Natural killer cell (primary cell): ENCODE measurements at regions of chr20 and their contacts with region 1.

Region 1: DNA sequence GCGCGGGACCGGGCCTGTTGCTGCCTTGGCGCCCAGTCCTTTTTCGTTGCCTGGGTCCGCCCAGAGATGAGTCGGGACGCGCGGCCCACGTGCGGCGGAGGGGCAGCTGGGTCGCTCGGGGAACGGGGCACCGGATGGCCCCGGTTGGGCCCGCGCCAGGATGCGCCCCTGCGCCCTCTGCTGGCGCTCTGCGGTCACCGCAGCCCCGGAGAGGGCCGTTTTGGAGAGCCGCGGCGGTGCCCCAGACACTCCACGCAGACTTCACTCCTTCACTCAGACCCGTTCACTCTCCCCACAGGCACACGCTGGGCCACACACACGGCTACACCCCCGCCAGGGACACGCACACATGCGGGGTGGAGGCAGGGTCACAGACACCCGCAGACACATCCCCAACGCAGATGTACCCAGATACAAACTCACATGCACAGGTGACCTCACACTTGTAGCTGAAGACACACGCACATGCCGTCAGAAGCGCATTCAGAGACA is 38.8 kb downstream of the SRC start:
- DNase-seq: peak; percentile 82 to 87
- ATAC-seq: peak; percentile 93 to 99 (median 97)
- H3K4me3 ChIP-seq: peak overlapping the region; percentile 44
- H3K4me3 Mint-ChIP-seq: peak overlapping the region; percentile 93
- H3K27ac ChIP-seq: no peak overlapping the region
- H3K27ac Mint-ChIP-seq: peak overlapping the region in 1 of 2 donors; percentile 81
- H3K4me1 ChIP-seq: peaks cover 15% of the 10 kb centered on the region
- H3K4me1 Mint-ChIP-seq: peaks cover 6 to 7% of the 10 kb centered on the region in 2 donors
- H3K27me3 ChIP-seq: no peaks in the 10 kb centered on the region
- H3K27me3 Mint-ChIP-seq: no peaks in the 10 kb centered on the region
- CTCF ChIP-seq: peak; percentile 85

Region 2: DNA sequence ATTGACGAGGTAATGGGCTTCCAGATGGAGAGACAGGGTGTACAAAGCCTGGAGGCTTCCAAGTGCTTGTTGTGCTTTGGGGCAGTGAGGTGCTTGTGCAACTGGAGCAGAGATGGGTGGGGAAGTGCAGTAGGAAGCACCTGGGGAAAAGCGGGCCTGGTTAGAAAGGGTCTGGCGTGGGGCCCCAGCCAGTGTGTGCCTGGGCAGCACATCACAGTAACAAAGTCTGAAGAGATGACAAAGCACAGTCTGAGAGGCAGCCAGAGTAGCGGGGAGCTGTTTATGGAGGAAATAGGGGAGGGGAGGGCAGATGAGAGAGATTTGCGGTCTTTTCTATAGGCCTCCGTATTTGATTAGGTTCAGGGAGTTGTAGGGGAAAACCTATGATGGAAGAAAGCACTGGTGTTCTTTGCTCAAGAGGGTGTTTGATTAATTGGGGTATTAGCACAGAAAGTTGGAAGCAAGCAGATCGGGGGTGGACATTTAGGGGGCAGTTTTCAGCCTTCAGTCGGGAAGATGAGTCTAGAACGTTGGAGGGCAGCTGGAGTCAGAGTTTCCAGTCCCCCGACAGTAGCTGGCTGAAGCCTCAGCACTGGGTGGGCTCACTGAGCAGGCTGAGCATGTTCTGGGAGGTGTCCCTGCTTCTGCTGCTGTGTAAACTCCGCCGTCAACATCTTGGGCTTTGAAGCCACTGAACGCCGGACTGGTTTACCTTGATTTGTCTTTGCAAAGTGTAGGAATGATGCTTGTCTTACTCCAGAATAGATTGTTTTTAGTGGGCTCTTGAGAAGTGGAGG is 189.9 kb before region 1 on chr20:
- intact Hi-C with region 1: loop called (anchors 2 kb)
- DNase-seq: peak in 1 of 2 donors; percentile 55
- ATAC-seq: no peak
- H3K4me3 ChIP-seq: no peak overlapping the region
- H3K4me3 Mint-ChIP-seq: no peak overlapping the region
- H3K27ac ChIP-seq: no peak overlapping the region
- H3K27ac Mint-ChIP-seq: peak overlapping the region; percentile 13 to 54
- H3K4me1 ChIP-seq: peaks cover 29% of the 10 kb centered on the region
- H3K4me1 Mint-ChIP-seq: peaks cover 61 to 64% of the 10 kb centered on the region in 2 donors
- H3K27me3 ChIP-seq: no peaks in the 10 kb centered on the region
- H3K27me3 Mint-ChIP-seq: no peaks in the 10 kb centered on the region
- CTCF ChIP-seq: no peak

Region 3: DNA sequence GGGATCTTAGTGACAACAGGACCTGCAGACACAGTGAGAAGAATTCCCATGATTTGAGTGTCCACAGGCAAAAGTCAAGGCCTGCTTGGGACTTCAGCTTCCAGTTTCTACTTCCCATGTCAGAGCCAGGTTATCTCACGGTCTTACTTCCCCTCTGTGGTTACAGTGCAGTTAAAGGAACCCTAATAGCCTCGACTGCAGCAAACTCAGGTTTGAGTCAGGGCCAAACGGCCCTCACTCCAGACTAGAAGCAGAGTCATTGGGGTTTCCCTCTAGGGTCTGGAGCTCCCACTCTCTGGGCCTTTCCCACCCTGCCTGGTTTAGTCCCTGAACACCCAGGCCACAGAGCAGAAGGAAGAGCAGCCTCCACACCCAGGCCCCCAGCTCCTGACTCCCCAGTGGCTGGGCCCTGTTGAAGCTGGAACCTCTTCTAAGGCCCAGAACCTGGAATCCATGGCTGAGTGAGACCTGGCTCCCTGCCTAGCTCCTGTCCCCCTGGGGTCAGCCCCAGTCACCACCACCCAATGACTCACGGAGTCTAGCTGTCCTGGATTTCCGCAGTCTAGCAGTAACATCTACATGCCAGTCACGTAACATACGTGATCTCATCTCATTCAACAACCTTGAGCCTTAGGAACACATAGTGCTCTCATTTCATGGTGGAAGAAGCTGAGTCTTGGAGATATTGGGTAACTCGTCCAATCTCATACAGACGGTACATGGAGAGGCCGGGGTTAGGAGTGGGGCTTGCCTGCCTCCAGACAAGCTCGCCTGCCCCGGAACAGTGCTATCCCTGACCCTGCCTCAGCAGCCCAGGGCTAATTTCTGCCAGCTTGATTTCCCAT is 113.9 kb before region 1 on chr20:
- intact Hi-C with region 1: loop called (anchors 1 kb)
- DNase-seq: peak in 1 of 2 donors; percentile 17
- ATAC-seq: peak; percentile 29 to 74 (median 48)
- H3K4me3 ChIP-seq: no peak overlapping the region
- H3K4me3 Mint-ChIP-seq: no peak overlapping the region
- H3K27ac ChIP-seq: peak overlapping the region; percentile 39
- H3K27ac Mint-ChIP-seq: peak overlapping the region in 1 of 2 donors; percentile 56
- H3K4me1 ChIP-seq: peaks cover 24% of the 10 kb centered on the region
- H3K4me1 Mint-ChIP-seq: no peaks in the 10 kb centered on the region
- H3K27me3 ChIP-seq: no peaks in the 10 kb centered on the region
- H3K27me3 Mint-ChIP-seq: peaks cover 0 to 5% of the 10 kb centered on the region in 2 donors
- CTCF ChIP-seq: no peak